Colonic mucosa (tissue), 4 donors: ENCODE measurements at regions of chr11 and their contacts with region 1.

Region 1: GRCh38 chr11:4072668-4073285 is 21.8 kb upstream of the RRM1 start:
- DNase-seq: peak; percentile 72
- H3K4me3 ChIP-seq: no peak overlapping the region
- H3K27ac ChIP-seq: no peak overlapping the region
- H3K4me1 ChIP-seq: no peaks in the 10 kb centered on the region
- H3K27me3 ChIP-seq: no peaks in the 10 kb centered on the region
- CTCF ChIP-seq: peak; percentile 81

Region 2: DNA sequence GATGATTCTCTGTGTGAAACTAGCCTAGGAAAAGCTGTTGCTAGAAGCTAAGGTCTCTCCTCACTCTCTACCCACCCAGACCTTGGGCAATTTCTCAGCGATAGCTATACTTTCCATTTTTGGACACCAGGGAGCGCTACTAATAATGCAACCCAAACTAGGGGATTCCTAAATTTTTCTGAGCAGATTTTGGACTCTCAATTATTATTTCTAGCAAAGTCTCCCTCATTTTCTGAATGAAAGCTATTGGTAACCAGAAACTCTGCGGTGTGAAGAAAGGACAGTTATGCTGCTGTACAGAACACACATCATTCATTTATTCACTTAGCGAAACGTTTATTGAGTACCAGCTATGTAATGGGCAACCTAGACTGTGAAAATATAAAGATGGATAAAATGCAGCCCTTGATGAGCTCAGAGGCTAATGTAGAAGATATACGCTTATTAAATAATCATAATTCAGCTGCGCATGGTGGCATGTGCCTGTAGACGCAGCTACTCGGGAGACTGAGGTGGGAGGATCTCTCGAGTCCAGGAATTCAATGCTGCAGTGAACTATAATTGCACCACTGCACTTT is 223.4 kb before region 1 on chr11:
- intact Hi-C with region 1: loop called (anchors 2 kb)
- DNase-seq: peak; percentile 56
- H3K4me3 ChIP-seq: no peak overlapping the region
- H3K27ac ChIP-seq: no peak overlapping the region
- H3K4me1 ChIP-seq: peaks cover 5% of the 10 kb centered on the region
- H3K27me3 ChIP-seq: no peaks in the 10 kb centered on the region
- CTCF ChIP-seq: peak; percentile 54